Activated B cell treated with CpG ODN at 0.5 μM for 24 hours (primary cell): ENCODE measurements at regions of chr1 and their contacts with region 1.

Region 1: GRCh38 chr1:202160377-202160940 is at the start of gene PTPN7:
- DNase-seq: peak; percentile 64
- ATAC-seq: peak; percentile 60
- H3K4me3 Mint-ChIP-seq: peak within 1 kb of the TSS; percentile 91
- H3K27ac Mint-ChIP-seq: peak within 1 kb of the TSS; percentile 92
- H3K4me1 Mint-ChIP-seq: peaks cover 83% of the 10 kb centered on the region
- H3K27me3 Mint-ChIP-seq: no peaks in the 10 kb centered on the region
- CTCF ChIP-seq: no peak
- total RNA-seq, gene PTPN7: 29.4 and 31.0 TPM in 2 replicates

Region 2: GRCh38 chr1:202144402-202145067 is 15.9 kb before region 1 on chr1 and contains the start of gene ARL8A:
- CTCF ChIA-PET with region 1: interaction called, 6 read pairs
- POLR2A ChIA-PET with region 1: interaction called, 29 read pairs
- intact Hi-C with region 1: loop called (anchors 1 kb)
- DNase-seq: peak; percentile 73
- ATAC-seq: peak; percentile 75
- H3K4me3 Mint-ChIP-seq: peak within 1 kb of the TSS; percentile 93
- H3K27ac Mint-ChIP-seq: peak within 1 kb of the TSS; percentile 96
- H3K4me1 Mint-ChIP-seq: peaks cover 48% of the 10 kb centered on the region
- H3K27me3 Mint-ChIP-seq: no peaks in the 10 kb centered on the region
- CTCF ChIP-seq: no peak
- total RNA-seq, gene ARL8A: 56.3 and 58.0 TPM in 2 replicates

Region 3: DNA sequence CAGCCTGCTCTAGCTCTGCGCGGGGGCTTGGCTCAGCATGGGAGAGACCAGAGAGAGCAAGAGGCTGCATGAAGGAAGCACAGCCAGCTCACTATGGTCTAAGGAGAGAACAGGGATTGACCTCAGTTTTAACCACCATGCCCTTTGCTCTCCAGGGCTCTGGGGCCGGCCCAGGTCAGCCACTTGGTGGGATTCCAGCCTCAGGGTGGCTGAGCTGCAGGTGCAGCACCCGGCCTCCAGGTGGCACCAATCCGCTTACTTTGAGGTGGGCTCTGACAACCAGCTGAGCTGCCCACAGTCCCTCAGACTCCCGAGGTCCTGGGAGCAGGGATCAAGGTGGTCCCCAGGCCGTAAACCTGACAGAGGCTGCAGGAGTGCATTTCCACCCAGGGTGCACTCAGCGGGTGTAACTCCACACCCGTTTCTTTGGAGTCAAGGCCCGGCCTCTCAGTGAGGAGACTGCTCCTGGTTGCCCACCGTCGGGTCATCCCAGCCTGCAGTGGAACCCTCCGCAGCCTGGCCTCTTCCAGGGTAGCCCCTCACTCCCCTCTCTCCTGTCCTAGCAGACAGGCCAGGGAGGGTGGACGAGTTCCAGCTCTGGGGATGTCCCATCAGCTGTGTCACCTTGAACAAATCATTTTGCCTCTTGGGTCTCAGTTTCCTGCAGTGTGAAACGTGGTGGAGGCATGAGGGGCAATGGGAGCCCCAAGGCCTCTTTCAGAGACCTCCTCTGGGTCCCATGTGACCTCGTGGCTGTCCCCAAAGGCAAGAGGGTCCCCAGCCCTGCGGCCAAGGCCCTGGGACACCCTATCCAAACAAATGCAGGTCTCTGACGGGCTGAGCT is 32.5 kb after region 1 on chr1:
- CTCF ChIA-PET with region 1: interaction called, 13 read pairs
- POLR2A ChIA-PET with region 1: no interaction called
- intact Hi-C with region 1: no loop called
- DNase-seq: peak; percentile 57
- ATAC-seq: peak; percentile 70
- H3K4me3 Mint-ChIP-seq: peak overlapping the region; percentile 64
- H3K27ac Mint-ChIP-seq: no peak overlapping the region
- H3K4me1 Mint-ChIP-seq: peaks cover 18% of the 10 kb centered on the region
- H3K27me3 Mint-ChIP-seq: peaks cover 30% of the 10 kb centered on the region
- CTCF ChIP-seq: no peak

Region 4: DNA sequence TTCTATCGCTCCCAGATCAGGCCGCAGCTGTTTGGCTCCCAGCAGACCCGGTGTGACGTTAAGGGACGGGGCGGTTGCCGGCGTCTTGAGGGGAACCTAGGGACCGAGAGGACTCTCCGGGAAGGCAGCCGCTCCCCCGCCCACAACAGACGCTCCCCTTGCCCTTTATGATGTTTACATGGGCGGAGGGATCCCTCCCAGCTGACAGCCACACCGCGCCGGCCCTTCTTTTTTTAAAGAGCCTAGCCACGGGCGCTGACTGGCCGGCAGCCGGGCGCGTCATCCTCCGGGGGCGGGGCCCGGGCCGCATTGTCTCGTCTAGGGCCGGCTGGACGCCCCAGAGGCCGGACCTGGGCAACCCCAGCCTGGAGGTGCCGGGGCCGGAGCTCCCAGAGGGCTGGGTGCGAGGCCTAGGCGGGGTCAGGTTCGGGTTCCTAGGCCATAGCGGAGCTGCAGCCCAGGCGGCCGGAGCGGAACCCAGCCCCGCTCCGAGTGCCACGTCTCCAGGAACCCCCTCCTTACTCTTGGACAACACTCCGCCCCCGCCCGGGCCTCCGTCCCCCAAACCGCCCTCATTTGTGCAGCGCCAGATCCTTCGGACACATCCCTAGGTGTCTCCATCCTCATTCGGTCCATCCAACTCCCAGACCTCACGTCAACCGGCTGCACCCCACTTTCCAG is 650.3 kb after region 1 on chr1 and contains the start of gene PCAT6:
- CTCF ChIA-PET with region 1: no interaction called
- POLR2A ChIA-PET with region 1: no interaction called
- intact Hi-C with region 1: loop called (anchors 5 kb)
- DNase-seq: peak; percentile 88
- ATAC-seq: peak; percentile 82
- H3K4me3 Mint-ChIP-seq: peak within 1 kb of the TSS; percentile 93
- H3K27ac Mint-ChIP-seq: peak within 1 kb of the TSS; percentile 80
- H3K4me1 Mint-ChIP-seq: peaks cover 36% of the 10 kb centered on the region
- H3K27me3 Mint-ChIP-seq: no peaks in the 10 kb centered on the region
- CTCF ChIP-seq: no peak
- total RNA-seq, gene PCAT6: 0.67 and 0.83 TPM in 2 replicates